CD14-positive monocyte (primary cell): ENCODE measurements at regions of chr2 and their contacts with region 1.

Region 1: DNA sequence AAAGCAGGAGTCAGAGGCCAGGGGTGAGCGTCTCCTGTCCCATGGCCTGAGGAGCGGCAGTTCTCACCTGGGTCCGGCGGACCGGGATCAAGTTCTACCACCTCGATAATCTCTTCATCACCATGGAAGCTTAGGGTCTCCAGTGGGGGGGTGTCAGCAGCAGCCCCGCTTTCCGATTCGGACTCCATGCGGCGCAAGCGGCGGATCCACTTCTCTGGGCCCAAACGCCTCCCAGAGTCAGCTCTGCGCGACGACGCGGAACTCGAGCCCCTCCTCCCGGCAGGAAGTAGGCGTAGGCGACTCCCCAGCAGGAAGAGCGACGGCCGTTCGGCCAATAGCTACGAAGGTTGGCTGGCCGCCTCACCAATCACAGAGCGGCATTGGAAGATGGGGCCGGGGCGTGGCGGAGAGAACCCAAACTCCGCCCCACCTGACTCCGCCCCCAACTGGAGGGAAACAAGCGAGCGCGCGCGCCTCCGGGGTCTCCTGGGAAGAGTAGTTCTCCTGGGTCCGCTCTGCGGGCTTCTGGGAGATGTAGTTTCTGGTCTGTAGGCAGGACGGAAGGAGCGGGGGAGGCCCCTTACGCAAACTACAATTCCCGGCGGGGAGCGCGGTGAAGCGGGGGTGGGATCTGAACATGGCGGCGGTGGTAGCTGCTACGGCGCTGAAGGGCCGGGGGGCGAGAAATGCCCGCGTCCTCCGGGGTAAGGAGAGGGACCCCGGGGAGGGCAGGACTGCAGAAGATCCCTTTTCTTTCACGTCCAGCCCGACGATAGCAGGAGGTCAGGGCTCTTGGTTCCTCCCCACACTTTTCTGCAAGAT is at the starts of genes AAMP and PNKD:
- DNase-seq: peak; percentile 99 to 100 (median 99)
- H3K4me3 ChIP-seq: peak within 1 kb of the TSS; percentile 82 to 97 (median 95)
- H3K4me3 Mint-ChIP-seq: peak within 1 kb of the TSS; percentile 90 to 96
- H3K27ac ChIP-seq: peak within 1 kb of the TSS; percentile 77 to 84
- H3K27ac Mint-ChIP-seq: peak within 1 kb of the TSS; percentile 84 to 95 (median 93)
- H3K4me1 ChIP-seq: peaks cover 33 to 42% of the 10 kb centered on the region in 2 donors
- H3K4me1 Mint-ChIP-seq: peaks cover 51% of the 10 kb centered on the region
- H3K27me3 ChIP-seq: no peaks in the 10 kb centered on the region
- H3K27me3 Mint-ChIP-seq: peaks cover 0 to 3% (median 0%) of the 10 kb centered on the region in 3 donors
- CTCF ChIP-seq: no peak
- polyA plus RNA-seq, gene AAMP: 90.8 to 108 (median 98.7) TPM
- polyA plus RNA-seq, gene PNKD: 79.8 to 92.0 (median 88.2) TPM

Region 2: DNA sequence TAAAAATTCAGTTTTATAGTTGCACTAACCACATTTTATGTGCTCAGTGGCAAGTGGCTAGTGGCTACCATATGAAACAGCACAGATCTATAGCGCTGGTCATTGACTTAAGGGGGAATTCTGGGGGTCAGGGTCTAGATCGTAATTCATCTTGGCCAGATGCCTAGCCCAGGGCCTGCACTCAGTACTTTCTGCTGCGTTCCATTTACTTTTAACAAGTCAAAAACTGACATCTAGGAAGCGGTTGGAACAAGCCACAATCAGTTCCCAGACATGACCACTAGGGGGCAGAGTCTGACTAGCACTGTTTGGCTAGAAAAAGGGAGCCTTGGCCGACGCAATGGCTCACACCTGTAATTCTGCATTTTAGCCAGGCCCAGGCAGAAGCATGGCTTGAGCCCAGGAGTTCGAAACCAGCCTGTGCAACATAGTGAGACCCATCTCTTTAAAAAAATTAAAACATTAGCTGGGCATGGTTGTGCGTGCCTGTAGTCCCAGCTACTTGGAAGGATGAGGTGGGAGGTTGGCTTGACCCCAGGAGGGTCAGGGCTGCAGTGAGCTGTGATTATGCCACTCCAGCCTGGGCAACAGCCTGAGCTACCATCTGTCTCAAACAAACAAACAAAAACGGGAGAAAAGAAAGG is 31.2 kb after region 1 on chr2:
- intact Hi-C with region 1: no loop called
- DNase-seq: peak; percentile 79 to 93 (median 84)
- H3K4me3 ChIP-seq: no peak overlapping the region
- H3K4me3 Mint-ChIP-seq: no peak overlapping the region
- H3K27ac ChIP-seq: no peak overlapping the region
- H3K27ac Mint-ChIP-seq: peak overlapping the region in 5 of 7 donors; percentile 42 to 82 (median 66)
- H3K4me1 ChIP-seq: peaks cover 2 to 8% of the 10 kb centered on the region in 2 donors
- H3K4me1 Mint-ChIP-seq: peaks cover 13% of the 10 kb centered on the region
- H3K27me3 ChIP-seq: no peaks in the 10 kb centered on the region
- H3K27me3 Mint-ChIP-seq: peaks cover 0 to 4% (median 0%) of the 10 kb centered on the region in 3 donors
- CTCF ChIP-seq: peak; percentile 92

Region 3: DNA sequence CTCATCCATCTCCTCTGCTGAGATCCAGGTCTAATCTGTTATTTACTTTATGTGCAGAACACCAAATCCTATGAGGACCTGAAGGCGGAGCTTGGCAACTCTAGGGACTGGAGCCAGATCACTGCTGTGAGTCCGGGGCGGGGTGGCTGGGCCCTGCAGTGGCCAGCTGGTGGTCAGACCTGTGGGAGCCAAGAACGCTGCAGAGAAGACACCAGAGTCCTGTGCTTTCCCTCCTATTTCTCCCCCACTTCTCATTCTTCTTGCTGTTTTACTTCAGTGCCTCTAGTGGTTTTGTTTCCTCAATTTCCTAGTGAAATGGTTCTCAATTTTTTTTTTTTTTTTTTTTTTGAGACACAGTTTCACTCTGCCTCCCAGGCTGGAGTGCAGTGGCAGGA is 168.5 kb after region 1 on chr2:
- intact Hi-C with region 1: no loop called
- DNase-seq: peak in 1 of 3 donors; percentile 7
- H3K4me3 ChIP-seq: no peak overlapping the region
- H3K4me3 Mint-ChIP-seq: no peak overlapping the region
- H3K27ac ChIP-seq: no peak overlapping the region
- H3K27ac Mint-ChIP-seq: peak overlapping the region in 2 of 7 donors; percentile 30 to 38
- H3K4me1 ChIP-seq: peaks cover 6 to 11% of the 10 kb centered on the region in 2 donors
- H3K4me1 Mint-ChIP-seq: peaks cover 15% of the 10 kb centered on the region
- H3K27me3 ChIP-seq: no peaks in the 10 kb centered on the region
- H3K27me3 Mint-ChIP-seq: peaks cover 0 to 1% (median 0%) of the 10 kb centered on the region in 3 donors
- CTCF ChIP-seq: no peak

Region 4: GRCh38 chr2:218452079-218452478 is 182.0 kb after region 1 on chr2:
- intact Hi-C with region 1: no loop called
- DNase-seq: no peak
- H3K4me3 ChIP-seq: no peak overlapping the region
- H3K4me3 Mint-ChIP-seq: no peak overlapping the region
- H3K27ac ChIP-seq: no peak overlapping the region
- H3K27ac Mint-ChIP-seq: no peak overlapping the region
- H3K4me1 ChIP-seq: no peaks in the 10 kb centered on the region
- H3K4me1 Mint-ChIP-seq: no peaks in the 10 kb centered on the region
- H3K27me3 ChIP-seq: no peaks in the 10 kb centered on the region
- H3K27me3 Mint-ChIP-seq: no peaks in the 10 kb centered on the region
- CTCF ChIP-seq: no peak

Region 5: DNA sequence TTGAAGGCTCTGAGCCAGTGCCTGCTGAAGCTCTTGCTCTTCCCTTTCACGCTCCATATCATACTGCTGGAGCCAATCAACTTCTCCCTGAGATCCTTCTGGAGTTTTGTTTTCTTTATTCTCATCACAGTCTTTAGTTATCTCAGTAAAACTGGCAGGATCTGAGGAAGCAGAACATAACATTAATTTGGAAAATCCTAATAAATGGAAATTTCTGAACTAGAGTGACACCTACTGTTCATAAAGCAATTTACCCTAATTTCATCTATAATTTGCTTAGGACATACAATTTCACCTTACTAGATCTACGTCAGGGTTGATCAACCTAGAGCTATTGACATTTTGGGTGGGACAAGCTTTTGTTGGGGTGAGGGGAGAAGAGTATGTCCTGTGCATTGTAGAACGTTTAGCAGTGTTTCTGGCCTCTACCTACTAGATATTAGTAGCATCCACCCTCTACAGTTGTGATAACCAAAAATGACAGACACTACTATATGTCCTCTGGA is 196.0 kb after region 1 on chr2:
- intact Hi-C with region 1: loop called (anchors 5 to 10 kb)
- DNase-seq: peak in 2 of 3 donors; percentile 18 to 30
- H3K4me3 ChIP-seq: no peak overlapping the region
- H3K4me3 Mint-ChIP-seq: no peak overlapping the region
- H3K27ac ChIP-seq: peak overlapping the region in 1 of 2 donors; percentile 11
- H3K27ac Mint-ChIP-seq: peak overlapping the region in 1 of 7 donors; percentile 8
- H3K4me1 ChIP-seq: peaks cover 6 to 10% of the 10 kb centered on the region in 2 donors
- H3K4me1 Mint-ChIP-seq: peaks cover 13% of the 10 kb centered on the region
- H3K27me3 ChIP-seq: no peaks in the 10 kb centered on the region
- H3K27me3 Mint-ChIP-seq: no peaks in the 10 kb centered on the region
- CTCF ChIP-seq: peak; percentile 79

Region 6: GRCh38 chr2:218568190-218569037 is 298.3 kb after region 1 on chr2 and contains the starts of genes CNOT9 and USP37:
- intact Hi-C with region 1: loop called in 1 of 2 experiments (anchors 10 kb)
- DNase-seq: peak; percentile 98 to 99 (median 99)
- H3K4me3 ChIP-seq: peak within 1 kb of the TSS; percentile 77 to 86 (median 77)
- H3K4me3 Mint-ChIP-seq: peak within 1 kb of the TSS; percentile 92 to 97
- H3K27ac ChIP-seq: peak within 1 kb of the TSS; percentile 92 to 96
- H3K27ac Mint-ChIP-seq: peak within 1 kb of the TSS; percentile 99 to 100 (median 99)
- H3K4me1 ChIP-seq: peaks cover 24 to 27% of the 10 kb centered on the region in 2 donors
- H3K4me1 Mint-ChIP-seq: peaks cover 45% of the 10 kb centered on the region
- H3K27me3 ChIP-seq: no peaks in the 10 kb centered on the region
- H3K27me3 Mint-ChIP-seq: no peaks in the 10 kb centered on the region
- CTCF ChIP-seq: no peak
- polyA plus RNA-seq, gene CNOT9: 14.5 to 21.5 (median 18.4) TPM
- polyA plus RNA-seq, gene USP37: 2.7 to 4.9 (median 2.7) TPM